Activated CD4-positive, alpha-beta memory T cell treated with anti-CD3 and anti-CD28 coated beads for 36 hours (primary cell): ENCODE measurements at regions of chr6 and their contacts with region 1.

Region 1: GRCh38 chr6:143098054-143098671 is 37.5 kb downstream of the AIG1 start:
- DNase-seq: no peak
- H3K4me3 Mint-ChIP-seq: no peak overlapping the region
- H3K27ac Mint-ChIP-seq: no peak overlapping the region
- H3K4me1 Mint-ChIP-seq: peaks cover 6% of the 10 kb centered on the region
- H3K27me3 Mint-ChIP-seq: no peaks in the 10 kb centered on the region

Region 2: DNA sequence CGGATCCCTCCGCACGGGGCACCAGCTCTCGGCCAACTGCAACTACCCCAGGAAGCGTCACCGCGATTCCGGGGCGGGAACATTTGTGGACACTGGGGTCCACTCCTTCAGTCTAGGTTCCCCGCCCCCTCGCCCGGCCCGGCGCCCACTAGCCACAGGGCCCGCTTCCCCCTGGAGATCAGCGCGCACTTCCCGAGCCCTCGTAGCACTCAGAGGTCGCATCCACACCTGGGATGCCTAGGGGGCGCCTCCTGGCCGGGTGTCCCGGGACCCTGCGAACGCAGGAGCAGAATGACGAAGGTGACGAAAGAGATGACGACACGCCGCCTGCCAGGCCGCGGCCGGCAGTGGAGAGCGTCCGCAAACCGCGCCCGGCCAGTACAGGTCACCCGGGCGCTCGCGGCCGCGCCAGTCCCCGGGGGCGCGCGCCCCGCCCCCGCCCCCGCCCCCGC is 37.8 kb before region 1 on chr6:
- CTCF ChIA-PET with region 1: no interaction called
- POLR2A ChIA-PET with region 1: no interaction called
- intact Hi-C with region 1: loop called (anchors 5 kb)
- DNase-seq: peak; percentile 83
- H3K4me3 Mint-ChIP-seq: peak overlapping the region; percentile 89
- H3K27ac Mint-ChIP-seq: peak overlapping the region; percentile 92
- H3K4me1 Mint-ChIP-seq: peaks cover 23% of the 10 kb centered on the region
- H3K27me3 Mint-ChIP-seq: no peaks in the 10 kb centered on the region

Region 3: DNA sequence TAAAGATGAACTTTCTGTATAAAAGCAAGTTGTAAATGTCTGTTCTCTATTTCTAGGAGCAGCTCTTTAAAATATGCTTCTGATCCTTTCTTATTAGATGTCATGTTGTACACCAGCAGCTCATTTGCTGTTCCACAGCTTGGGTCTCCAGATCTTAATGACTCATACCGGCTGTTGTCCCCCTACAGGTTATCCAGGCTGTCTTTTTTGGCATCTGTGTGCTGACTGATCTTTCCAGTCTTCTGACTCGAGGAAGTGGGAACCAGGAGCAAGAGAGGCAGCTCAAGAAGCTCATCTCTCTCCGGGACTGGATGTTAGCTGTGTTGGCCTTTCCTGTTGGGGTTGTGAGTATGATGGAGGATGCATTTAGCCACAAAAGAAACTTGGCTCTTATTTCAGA is 38.5 kb after region 1 on chr6:
- CTCF ChIA-PET with region 1: no interaction called
- POLR2A ChIA-PET with region 1: no interaction called
- intact Hi-C with region 1: loop called (anchors 5 kb)
- DNase-seq: no peak
- H3K4me3 Mint-ChIP-seq: peak overlapping the region; percentile 13
- H3K27ac Mint-ChIP-seq: peak overlapping the region; percentile 61
- H3K4me1 Mint-ChIP-seq: peaks cover 42% of the 10 kb centered on the region
- H3K27me3 Mint-ChIP-seq: no peaks in the 10 kb centered on the region